AG04450 (cell line): ENCODE measurements at regions of chr7 and their contacts with region 1.

Region 1: GRCh38 chr7:85554236-85555178 is 367.7 kb upstream of the SEMA3D start:
- DNase-seq: peak; percentile 62
- H3K4me3 ChIP-seq: no peak overlapping the region
- H3K27ac ChIP-seq: no peak overlapping the region
- H3K27me3 ChIP-seq: no peaks in the 10 kb centered on the region
- CTCF ChIP-seq: peak; percentile 72

Region 2: DNA sequence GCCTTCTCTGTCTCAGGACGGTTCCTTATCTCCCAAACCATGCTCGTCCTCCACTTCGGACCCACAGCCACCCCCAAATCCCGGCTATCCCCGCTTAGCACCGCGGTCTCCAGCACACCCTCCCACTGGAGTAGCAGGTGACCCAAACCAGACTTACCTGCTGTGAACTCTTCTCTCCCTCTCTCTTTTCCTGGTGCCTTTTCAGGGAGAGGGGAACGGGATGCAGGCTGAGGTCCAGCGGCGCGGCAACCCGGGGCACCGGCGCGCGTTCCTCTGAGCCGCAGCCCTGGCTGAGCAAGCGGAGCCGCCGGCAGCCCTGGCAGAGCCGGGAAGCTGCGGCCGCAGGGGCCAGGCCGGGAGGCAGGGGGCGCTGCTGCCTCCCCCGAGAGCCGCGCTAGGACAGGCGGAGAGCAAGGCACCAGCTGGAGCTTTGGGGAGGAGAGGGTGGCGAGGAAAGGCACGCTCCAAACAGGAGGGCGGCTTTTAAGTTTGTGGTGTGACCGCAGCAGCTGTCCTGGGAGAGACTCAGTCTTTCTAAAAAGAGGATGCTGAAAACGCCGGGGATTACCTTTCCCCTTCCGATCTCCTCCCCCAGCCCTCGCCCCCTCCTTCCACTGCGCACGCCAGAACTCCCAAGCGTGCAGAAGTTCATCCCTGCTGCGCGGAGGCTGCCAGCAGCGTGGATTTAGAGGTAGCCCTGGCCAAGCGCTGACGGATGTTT is 367.8 kb before region 1 on chr7 and contains the start of gene SEMA3D:
- CTCF ChIA-PET with region 1: interaction called, 23 read pairs
- POLR2A ChIA-PET with region 1: no interaction called
- DNase-seq: peak; percentile 70
- H3K4me3 ChIP-seq: peak within 1 kb of the TSS; percentile 80
- H3K27ac ChIP-seq: no peak within 1 kb of the TSS
- H3K27me3 ChIP-seq: no peaks in the 10 kb centered on the region
- CTCF ChIP-seq: peak; percentile 89
- polyA plus RNA-seq, gene SEMA3D: 5.7 and 7.4 TPM in 2 replicates

Region 3: DNA sequence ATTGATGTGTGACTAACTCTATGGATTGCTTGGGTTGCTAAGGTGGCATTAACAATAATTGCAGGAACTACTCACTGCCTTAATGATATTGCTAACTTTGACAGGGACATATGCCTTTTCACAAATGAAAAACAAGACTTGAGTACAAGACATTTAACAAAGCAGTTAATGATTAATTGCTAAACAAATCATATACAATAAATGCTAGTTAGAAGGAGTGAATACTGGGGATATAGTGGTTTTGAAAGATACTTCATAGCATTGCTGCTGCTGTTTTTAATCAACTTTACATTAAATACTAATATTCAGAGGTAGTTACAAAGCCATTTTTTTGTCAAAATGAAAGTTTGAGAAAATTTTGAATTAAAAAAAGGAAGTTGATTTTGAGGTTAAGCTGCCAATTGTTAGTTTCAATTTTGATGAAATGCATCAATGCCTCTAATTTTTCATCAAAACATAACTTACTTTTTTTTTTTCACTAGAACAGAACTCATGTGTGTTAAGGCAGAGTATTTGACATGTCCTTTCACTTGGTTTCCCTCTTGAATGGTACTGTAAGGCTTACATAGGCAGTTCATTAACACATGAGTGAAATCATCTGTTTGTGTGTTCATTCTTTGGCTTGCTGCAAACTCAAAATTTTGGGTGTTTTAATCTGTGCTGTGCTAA is 261.5 kb before region 1 on chr7:
- CTCF ChIA-PET with region 1: no interaction called
- POLR2A ChIA-PET with region 1: no interaction called
- DNase-seq: no peak
- H3K4me3 ChIP-seq: no peak overlapping the region
- H3K27ac ChIP-seq: no peak overlapping the region
- H3K27me3 ChIP-seq: no peaks in the 10 kb centered on the region
- CTCF ChIP-seq: no peak

Region 4: DNA sequence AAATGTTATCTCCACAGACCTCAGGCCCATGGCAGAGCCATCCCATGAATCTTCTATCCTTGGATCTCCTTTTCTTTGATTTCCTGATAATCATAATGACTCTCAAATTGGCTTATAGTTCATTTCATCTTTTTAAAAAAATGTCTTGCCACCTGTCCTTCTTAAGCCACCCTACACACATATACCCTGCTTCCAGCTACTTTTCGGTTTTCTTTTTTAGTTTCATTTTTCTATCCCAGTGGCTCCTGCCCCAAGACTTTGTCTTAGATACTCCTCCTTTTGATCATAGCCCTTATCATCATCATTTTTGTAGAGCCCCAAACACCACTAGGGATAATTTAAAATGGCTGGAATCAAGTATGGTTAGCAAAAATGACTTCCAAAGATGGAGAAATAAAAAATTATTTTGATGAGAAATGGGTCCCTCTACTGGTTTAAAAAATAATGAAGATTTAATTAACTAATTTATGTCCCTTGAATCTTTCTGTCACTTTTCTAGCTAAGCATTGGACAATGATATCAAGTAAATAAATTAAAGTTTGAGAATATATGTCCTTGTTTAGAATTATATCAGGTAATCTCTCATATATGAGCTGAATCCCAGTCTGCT is 90.4 kb before region 1 on chr7:
- CTCF ChIA-PET with region 1: interaction called, 20 read pairs
- POLR2A ChIA-PET with region 1: no interaction called
- DNase-seq: no peak
- H3K4me3 ChIP-seq: no peak overlapping the region
- H3K27ac ChIP-seq: no peak overlapping the region
- H3K27me3 ChIP-seq: no peaks in the 10 kb centered on the region
- CTCF ChIP-seq: peak; percentile 33; the same call in 1 of the 2 replicates

Region 5: DNA sequence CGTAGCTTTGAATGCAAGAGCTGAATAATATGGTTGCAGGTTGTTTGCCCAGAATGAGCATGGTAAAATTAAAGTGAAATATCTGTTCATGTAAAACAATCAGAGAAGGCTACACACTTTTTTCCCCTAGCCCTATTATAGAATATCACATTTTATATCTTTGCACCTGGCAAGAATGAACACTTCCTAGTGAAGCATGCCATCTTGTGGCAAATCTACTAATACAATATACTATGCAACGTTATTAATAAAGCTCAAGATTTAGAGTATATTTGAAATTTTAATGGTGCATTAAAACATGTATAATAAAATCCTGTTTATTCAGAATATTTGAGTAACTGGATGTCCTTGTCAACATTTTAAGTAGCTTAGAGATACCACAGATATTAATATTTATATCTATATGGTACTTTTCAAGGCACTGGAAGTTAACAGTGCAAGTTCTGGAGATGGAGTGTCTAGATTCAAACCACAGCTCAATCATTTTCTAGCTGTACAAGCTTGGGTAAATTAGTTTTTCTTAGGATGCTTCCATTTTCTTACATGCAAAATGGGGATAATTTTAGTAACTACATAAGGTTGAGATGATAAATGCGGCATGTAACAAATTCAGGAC is 275.4 kb after region 1 on chr7:
- CTCF ChIA-PET with region 1: interaction called, 13 read pairs
- POLR2A ChIA-PET with region 1: no interaction called
- DNase-seq: no peak
- H3K4me3 ChIP-seq: no peak overlapping the region
- H3K27ac ChIP-seq: no peak overlapping the region
- H3K27me3 ChIP-seq: no peaks in the 10 kb centered on the region
- CTCF ChIP-seq: peak; percentile 44

Region 6: GRCh38 chr7:86372262-86372661 is 817.8 kb after region 1 on chr7:
- CTCF ChIA-PET with region 1: no interaction called
- POLR2A ChIA-PET with region 1: no interaction called
- DNase-seq: no peak
- H3K4me3 ChIP-seq: no peak overlapping the region
- H3K27ac ChIP-seq: no peak overlapping the region
- H3K27me3 ChIP-seq: no peaks in the 10 kb centered on the region
- CTCF ChIP-seq: no peak